ENCODE measurements at regions of chr2 and their contacts with region 1.

Region 1: DNA sequence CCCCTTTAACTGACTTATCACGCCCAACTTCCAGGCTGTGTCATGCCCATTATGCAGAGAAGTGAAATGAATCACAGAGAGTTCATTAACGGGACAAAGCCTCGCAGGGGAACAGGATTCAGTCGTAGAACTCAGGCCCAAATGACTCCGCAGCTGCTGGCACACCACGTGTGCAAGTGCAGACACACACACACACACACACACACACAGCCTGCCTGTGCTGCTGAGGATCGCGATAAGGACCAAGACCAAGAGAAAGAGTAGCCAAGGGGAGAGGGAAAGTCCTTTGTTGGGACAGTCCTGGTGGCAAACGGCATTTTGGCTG is 90.0 kb upstream of the TAF1B start:
- DNase-seq: peak; percentile 90
- H3K4me3 Mint-ChIP-seq: peak overlapping the region; percentile 68
- H3K27ac Mint-ChIP-seq: peak overlapping the region; percentile 91
- H3K4me1 Mint-ChIP-seq: peaks cover 70% of the 10 kb centered on the region
- H3K27me3 Mint-ChIP-seq: no peaks in the 10 kb centered on the region

Region 2: GRCh38 chr2:9493478-9493877 is 259.8 kb before region 1 on chr2:
- CTCF ChIA-PET with region 1: no interaction called
- POLR2A ChIA-PET with region 1: interaction called, 3 read pairs
- intact Hi-C with region 1: loop called (anchors 1 kb)
- DNase-seq: no peak
- H3K4me3 Mint-ChIP-seq: no peak overlapping the region
- H3K27ac Mint-ChIP-seq: peak overlapping the region; percentile 80
- H3K4me1 Mint-ChIP-seq: peaks cover 52% of the 10 kb centered on the region
- H3K27me3 Mint-ChIP-seq: no peaks in the 10 kb centered on the region

Region 3: GRCh38 chr2:9594366-9595054 is 158.7 kb before region 1 on chr2:
- CTCF ChIA-PET with region 1: no interaction called
- POLR2A ChIA-PET with region 1: interaction called, 5 read pairs
- intact Hi-C with region 1: loop called (anchors 1 kb)
- DNase-seq: no peak
- H3K4me3 Mint-ChIP-seq: no peak overlapping the region
- H3K27ac Mint-ChIP-seq: peak overlapping the region; percentile 83
- H3K4me1 Mint-ChIP-seq: peaks cover 81% of the 10 kb centered on the region
- H3K27me3 Mint-ChIP-seq: no peaks in the 10 kb centered on the region

Region 4: DNA sequence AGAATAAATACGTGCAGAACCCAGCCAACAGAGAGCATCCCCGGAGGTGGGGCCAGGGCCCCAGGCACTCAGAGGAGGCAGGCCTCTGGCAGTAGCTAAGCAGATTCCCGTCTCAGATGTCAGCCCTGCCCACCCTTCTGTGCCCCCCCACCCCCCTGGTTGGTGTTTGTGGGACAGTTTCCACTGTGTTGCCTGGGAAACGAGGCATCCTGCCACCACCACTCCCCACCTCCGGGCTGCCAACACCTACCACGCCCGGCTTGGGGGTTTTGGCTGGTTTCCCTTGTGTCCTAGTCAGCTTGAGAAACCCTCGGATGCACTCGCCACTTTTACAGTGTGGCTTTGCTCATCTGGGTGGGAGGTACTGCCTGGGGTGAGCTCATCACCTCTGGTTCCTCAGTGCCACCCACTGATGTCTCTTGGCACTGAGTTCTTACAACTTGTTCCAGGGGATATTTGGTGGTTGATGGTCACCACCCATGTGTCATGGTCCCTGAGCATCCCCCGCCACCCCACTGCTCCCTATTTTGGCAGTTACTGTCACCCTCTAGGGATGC is 50.1 kb before region 1 on chr2:
- CTCF ChIA-PET with region 1: interaction called, 6 read pairs
- POLR2A ChIA-PET with region 1: interaction called, 26 read pairs
- intact Hi-C with region 1: no loop called
- DNase-seq: peak; percentile 95
- H3K4me3 Mint-ChIP-seq: no peak overlapping the region
- H3K27ac Mint-ChIP-seq: peak overlapping the region; percentile 75
- H3K4me1 Mint-ChIP-seq: peaks cover 54% of the 10 kb centered on the region
- H3K27me3 Mint-ChIP-seq: peaks cover 3% of the 10 kb centered on the region

Region 5: DNA sequence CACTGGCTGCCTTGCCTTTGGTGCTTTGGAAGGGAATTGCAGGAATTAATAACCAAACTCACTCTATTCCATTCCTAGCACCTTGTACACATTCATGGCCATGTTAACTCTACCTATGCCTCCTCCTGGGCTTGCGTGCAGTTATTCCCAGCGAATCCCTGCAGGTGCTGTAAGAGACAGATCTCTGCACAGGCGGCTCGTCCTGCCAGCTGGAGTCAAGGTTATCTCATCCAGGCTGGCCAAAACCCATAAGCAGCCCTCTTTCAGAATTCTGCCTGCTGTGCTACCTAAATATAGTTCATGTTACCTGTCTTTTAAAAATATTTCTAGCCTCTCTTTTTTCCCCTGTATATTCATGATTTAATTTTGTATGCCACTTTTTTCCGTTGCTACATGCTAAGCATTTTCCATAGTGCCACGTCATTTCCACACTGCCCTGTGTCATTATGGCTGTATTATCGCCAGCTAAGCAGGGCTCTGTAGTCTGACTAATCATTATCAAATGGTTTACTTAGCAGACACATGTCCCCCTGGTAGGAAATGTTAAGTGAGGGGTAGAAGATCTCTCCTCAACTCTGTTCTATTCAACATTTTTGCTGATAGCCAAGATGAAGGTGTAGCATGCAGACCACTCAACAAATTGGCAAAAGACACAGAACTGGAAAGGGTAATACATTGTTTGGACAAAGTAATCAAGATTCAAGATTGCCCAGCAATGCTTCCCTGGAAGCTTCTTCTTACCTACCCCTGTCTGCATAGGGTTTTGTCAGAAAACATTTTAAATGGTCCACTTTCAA is 10.3 kb after region 1 on chr2:
- CTCF ChIA-PET with region 1: interaction called, 28 read pairs
- POLR2A ChIA-PET with region 1: interaction called, 13 read pairs
- intact Hi-C with region 1: loop called (anchors 1 kb)
- DNase-seq: peak; percentile 81
- H3K4me3 Mint-ChIP-seq: no peak overlapping the region
- H3K27ac Mint-ChIP-seq: peak overlapping the region; percentile 31
- H3K4me1 Mint-ChIP-seq: peaks cover 47% of the 10 kb centered on the region
- H3K27me3 Mint-ChIP-seq: no peaks in the 10 kb centered on the region